Kidney (tissue), 22 donors: ENCODE measurements at regions of chr12 and their contacts with region 1.

Region 1: GRCh38 chr12:110093631-110094311 is 30.4 kb upstream of the IFT81 start:
- DNase-seq: no peak
- H3K4me3 ChIP-seq: no peak overlapping the region
- H3K27ac ChIP-seq: no peak overlapping the region
- H3K4me1 ChIP-seq: no peaks in the 10 kb centered on the region
- H3K27me3 ChIP-seq: no peaks in the 10 kb centered on the region
- CTCF ChIP-seq: no peak

Region 2: DNA sequence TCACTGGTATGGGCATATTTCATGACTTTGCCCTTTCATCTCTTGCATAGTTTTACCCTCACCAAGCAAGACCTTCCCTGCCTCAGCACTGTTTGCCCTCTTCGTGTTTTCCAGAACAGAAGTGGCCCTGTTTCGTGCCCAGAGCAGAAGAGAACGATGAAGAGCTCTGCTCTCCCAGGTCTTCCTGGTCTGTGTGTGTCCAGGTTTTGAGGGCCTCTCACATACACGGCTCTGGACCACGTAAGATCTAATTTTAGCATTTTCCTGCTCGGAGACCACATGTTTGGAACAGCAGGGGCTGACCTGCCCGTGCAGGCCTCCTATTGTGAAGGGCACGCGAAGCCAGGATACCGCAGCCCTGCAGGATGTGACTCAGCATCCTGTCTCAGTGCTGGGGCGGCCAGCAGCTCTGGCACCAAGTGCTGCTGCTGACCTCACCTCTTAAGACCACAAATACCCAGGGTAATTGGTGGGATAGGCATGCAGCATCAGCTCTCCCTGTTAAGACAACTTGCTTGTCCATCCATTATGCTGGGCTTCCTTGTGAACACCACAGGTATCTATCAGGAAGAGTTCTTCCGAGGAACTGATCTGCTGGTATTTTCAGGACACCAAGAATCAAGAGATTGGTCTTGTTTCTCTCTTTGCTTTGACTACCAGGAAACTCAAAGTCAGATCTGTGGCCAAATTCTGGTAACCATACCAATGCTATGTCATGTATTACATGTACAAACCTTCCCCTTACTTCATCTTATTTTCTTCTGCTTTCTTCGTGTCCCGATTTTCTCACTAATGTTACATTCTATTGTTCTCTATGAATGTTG is 1255.4 kb before region 1 on chr12:
- intact Hi-C with region 1: no loop called
- DNase-seq: peak in 2 of 5 donors; percentile 68 to 94
- H3K4me3 ChIP-seq: peak overlapping the region in 1 of 3 donors; percentile 18
- H3K27ac ChIP-seq: peak overlapping the region; percentile 95
- H3K4me1 ChIP-seq: peaks cover 0 to 54% (median 43%) of the 10 kb centered on the region in 3 donors
- H3K27me3 ChIP-seq: no peaks in the 10 kb centered on the region
- CTCF ChIP-seq: no peak

Region 3: DNA sequence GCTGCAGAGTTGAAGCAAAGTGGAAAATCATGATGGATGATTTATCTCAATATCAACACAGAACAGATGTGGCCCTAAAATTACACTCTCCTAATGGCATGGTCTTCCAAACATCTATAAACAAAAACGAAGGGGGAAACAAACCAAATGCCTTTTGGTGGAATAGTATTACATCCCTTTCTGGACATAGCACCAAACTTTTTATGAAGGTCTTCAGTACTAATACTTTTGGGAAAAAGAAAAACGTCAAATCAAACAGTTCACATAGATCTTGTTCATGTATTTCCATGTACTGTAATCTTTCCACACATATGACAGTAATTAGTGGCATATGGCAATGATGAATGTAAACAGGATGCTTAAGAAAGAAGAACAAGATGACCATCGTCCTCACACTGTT is 332.6 kb after region 1 on chr12:
- intact Hi-C with region 1: loop called (anchors 10 kb)
- DNase-seq: no peak
- H3K4me3 ChIP-seq: no peak overlapping the region
- H3K27ac ChIP-seq: no peak overlapping the region
- H3K4me1 ChIP-seq: no peaks in the 10 kb centered on the region
- H3K27me3 ChIP-seq: no peaks in the 10 kb centered on the region
- CTCF ChIP-seq: no peak